SK-N-SH (cell line): ENCODE measurements at regions of chr4 and their contacts with region 1.

Region 1: DNA sequence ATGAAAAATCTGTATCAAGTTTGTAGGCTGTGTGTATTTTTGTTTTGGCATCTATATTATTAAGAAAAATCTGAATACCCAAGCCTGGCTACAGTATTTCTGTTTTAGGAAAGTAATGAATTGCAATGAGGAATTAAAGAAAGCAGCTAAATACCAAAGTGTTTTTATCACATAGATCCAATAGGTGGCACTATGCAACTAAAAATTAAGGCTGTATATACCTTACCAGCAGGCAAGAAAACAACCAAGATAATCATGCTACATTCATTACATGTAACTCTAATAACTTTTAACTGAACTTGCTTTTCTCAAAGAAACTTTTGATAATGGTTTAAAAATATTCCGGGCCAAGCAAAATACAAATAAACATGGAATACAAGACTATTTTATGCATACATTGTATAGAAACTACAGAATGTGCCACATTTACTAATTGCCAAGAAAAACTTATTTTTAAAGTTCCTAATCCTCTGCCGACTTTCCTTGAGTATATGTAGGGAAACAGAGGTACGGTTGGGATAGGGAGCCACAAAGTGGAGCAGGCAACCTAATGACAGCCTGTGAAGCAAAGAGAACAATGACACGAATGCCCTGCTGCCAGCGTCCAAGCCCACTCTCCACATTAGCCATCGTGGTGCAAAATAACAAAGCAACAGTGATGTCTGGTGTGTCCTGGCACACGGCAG is 63.7 kb downstream of the SEC24D start:
- DNase-seq: no peak
- H3K4me3 ChIP-seq: no peak overlapping the region; a peak in 1 of 4 replicates
- H3K27ac ChIP-seq: peak overlapping the region; percentile 69 to 99
- H3K4me1 ChIP-seq: peaks cover 54 to 63% of the 10 kb centered on the region in 2 experiments
- H3K27me3 ChIP-seq: no peaks in the 10 kb centered on the region
- CTCF ChIP-seq: peak; percentile 77
- EP300 ChIP-seq: no peak
- RAD21 ChIP-seq: peak; percentile 88

Region 2: DNA sequence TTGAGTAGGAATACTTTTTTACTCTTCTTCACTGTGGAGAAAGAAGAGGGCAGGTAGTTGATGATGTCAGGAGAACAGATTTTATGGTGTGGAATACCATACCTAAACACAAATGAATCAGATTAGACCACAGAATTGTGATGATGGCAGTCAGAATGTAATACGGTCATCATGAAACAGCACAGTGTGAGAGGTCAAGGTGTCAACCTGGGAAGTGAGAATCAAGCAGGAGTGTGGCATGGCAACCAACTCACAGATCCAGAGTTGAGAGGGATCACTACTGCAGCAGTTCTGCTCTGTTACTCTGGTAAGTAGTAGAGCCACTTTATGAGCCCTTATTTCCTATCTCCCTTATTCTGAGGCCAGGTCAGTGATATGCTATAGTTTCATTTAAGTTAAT is 59.4 kb before region 1 on chr4:
- CTCF ChIA-PET with region 1: no interaction called
- POLR2A ChIA-PET with region 1: no interaction called
- DNase-seq: no peak
- H3K4me3 ChIP-seq: no peak overlapping the region
- H3K27ac ChIP-seq: no peak overlapping the region
- H3K4me1 ChIP-seq: peaks cover 0 to 10% of the 10 kb centered on the region in 2 experiments; a peak in 2 of 4 replicates
- H3K27me3 ChIP-seq: no peaks in the 10 kb centered on the region
- CTCF ChIP-seq: no peak
- EP300 ChIP-seq: no peak
- RAD21 ChIP-seq: no peak

Region 3: GRCh38 chr4:118740869-118741268 is 31.4 kb before region 1 on chr4:
- CTCF ChIA-PET with region 1: interaction called, 33 read pairs
- POLR2A ChIA-PET with region 1: no interaction called
- DNase-seq: peak; percentile 10
- H3K4me3 ChIP-seq: no peak overlapping the region
- H3K27ac ChIP-seq: peak overlapping the region; percentile 45 to 86; a peak in 3 of 4 replicates
- H3K4me1 ChIP-seq: peaks cover 0 to 14% of the 10 kb centered on the region in 2 experiments; a peak in 2 of 4 replicates
- H3K27me3 ChIP-seq: no peaks in the 10 kb centered on the region
- CTCF ChIP-seq: peak; percentile 61
- EP300 ChIP-seq: no peak
- RAD21 ChIP-seq: peak; percentile 63

Region 4: GRCh38 chr4:118746292-118746919 is 25.8 kb before region 1 on chr4:
- CTCF ChIA-PET with region 1: interaction called, 33 read pairs
- POLR2A ChIA-PET with region 1: no interaction called
- DNase-seq: no peak
- H3K4me3 ChIP-seq: no peak overlapping the region
- H3K27ac ChIP-seq: peak overlapping the region in 1 of 2 experiments; percentile 70; a peak in 2 of 4 replicates
- H3K4me1 ChIP-seq: peaks cover 3 to 22% of the 10 kb centered on the region in 2 experiments; a peak in 2 of 4 replicates
- H3K27me3 ChIP-seq: no peaks in the 10 kb centered on the region
- CTCF ChIP-seq: no peak
- EP300 ChIP-seq: no peak
- RAD21 ChIP-seq: no peak

Region 5: GRCh38 chr4:119050527-119051090 is 278.4 kb after region 1 on chr4:
- CTCF ChIA-PET with region 1: no interaction called
- POLR2A ChIA-PET with region 1: no interaction called
- DNase-seq: no peak
- H3K4me3 ChIP-seq: no peak overlapping the region
- H3K27ac ChIP-seq: no peak overlapping the region
- H3K4me1 ChIP-seq: peaks cover 0 to 8% of the 10 kb centered on the region in 2 experiments; a peak in 2 of 4 replicates
- H3K27me3 ChIP-seq: no peaks in the 10 kb centered on the region
- CTCF ChIP-seq: no peak
- EP300 ChIP-seq: no peak
- RAD21 ChIP-seq: no peak